ENCODE measurements at regions of chr20 and their contacts with region 1.

Region 1: DNA sequence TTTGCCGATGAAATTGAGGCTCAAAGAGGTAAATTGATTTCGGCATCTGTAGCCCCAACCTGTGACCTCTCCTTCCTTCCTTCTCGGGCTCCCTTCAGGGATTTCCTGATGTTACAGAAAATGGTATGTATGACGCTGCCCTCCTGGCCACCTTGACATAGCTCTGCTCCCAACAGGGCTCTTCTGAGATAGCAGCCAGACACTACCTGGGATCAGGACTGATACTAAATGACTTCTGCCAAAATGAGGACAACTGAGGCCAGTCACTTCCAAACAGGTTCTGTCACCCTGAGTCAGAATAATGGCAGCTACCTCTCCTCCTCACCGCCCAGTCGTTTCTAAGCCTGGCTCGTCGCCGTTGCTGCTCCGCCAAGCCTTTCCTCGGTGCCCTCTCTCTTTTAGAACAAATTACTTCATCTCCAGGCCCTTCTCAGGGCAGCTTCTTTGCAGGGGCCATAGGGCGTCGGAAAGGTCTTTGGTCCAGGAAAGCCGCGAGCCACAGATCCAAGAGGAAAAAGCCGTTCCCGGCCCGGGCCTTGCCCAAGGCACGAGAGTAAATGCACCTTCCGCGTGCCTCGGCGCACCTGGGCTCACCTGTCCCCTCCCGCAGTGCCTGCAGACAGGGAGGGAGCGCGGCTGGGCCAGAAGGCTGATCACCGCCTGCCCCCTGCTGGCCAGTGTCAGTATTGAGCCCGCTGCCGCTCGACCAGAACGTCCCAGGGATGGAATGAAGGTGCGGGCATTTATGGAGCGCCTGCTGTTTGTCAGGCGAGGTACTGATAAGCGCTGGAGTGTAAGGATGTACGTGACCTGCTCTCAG is 904 bp upstream of the LPIN3 start:
- DNase-seq: peak; percentile 85 to 86
- ATAC-seq: peak; percentile 69 to 89 (median 84)
- H3K4me3 ChIP-seq: peak overlapping the region in 9 of 10 donors; percentile 36 to 67 (median 59)
- H3K27ac ChIP-seq: peak overlapping the region; percentile 40 to 86 (median 80)
- H3K4me1 ChIP-seq: peaks cover 3 to 48% (median 25%) of the 10 kb centered on the region in 9 donors
- H3K27me3 ChIP-seq: peaks cover 0 to 11% (median 0%) of the 10 kb centered on the region in 7 donors
- CTCF ChIP-seq: peak; percentile 98 to 100 (median 99)

Region 2: DNA sequence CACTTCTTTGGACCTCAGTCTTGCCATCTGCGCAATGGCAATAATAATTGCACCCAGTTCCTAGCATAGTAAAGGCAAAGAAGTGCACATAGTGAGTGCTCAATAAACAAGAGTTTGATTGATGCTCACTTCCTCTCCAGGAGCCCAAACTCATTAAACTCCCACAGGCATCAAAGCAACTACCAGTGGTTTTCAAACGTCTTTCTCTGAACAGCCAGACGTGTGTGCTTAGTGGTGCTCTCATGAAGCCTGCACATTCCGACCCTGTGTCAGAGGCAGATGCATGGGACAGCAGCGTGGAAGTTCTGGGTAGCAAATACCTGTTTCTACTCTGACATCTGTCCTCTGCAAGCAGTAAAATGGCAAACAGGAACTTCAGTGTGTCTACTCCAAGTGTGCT is 504.4 kb before region 1 on chr20:
- intact Hi-C with region 1: no loop called
- DNase-seq: no peak
- ATAC-seq: no peak
- H3K4me3 ChIP-seq: no peak overlapping the region
- H3K27ac ChIP-seq: no peak overlapping the region
- H3K4me1 ChIP-seq: no peaks in the 10 kb centered on the region
- H3K27me3 ChIP-seq: peaks cover 0 to 5% (median 0%) of the 10 kb centered on the region in 7 donors
- CTCF ChIP-seq: no peak

Region 3: GRCh38 chr20:40962730-40963504 is 376.8 kb before region 1 on chr20:
- intact Hi-C with region 1: loop called in 3 of 10 experiments (anchors 5 to 10 kb)
- DNase-seq: peak; percentile 62 to 65
- ATAC-seq: peak; percentile 77 to 89 (median 84)
- H3K4me3 ChIP-seq: no peak overlapping the region
- H3K27ac ChIP-seq: no peak overlapping the region
- H3K4me1 ChIP-seq: peaks cover 0 to 15% (median 0%) of the 10 kb centered on the region in 9 donors
- H3K27me3 ChIP-seq: peaks cover 0 to 4% (median 0%) of the 10 kb centered on the region in 7 donors
- CTCF ChIP-seq: peak; percentile 82 to 96 (median 92)

Region 4: DNA sequence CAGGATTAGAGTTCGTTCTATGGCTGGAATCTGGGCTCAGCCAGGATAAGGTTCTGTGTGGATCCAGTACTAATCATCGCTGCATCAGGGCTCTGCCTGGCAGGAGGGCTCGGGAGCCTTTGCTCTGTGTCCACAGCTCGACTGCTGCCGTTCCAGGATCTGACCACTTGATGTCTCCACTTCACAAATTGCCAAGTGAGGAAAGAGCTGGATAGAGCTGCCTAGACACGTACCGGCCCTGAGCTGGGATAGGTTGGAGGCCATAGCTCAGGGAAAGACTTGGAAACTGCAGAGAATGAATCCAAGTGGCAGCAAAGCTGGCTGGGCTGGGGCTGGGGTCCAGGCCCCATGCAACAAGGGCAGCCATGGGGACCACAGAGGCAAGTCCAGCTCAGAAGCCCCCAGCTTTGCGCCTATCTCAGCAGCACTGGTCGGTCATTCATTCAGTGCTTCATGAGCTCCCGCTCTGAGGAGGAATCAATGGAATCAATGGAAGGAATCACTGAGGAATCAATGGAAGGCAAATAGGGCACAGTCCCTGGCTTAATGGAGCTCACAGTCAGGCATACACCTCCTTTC is 349.1 kb before region 1 on chr20:
- intact Hi-C with region 1: loop called in 1 of 10 experiments (anchors 10 kb)
- DNase-seq: peak; percentile 68 to 83
- ATAC-seq: peak; percentile 96 to 99 (median 97)
- H3K4me3 ChIP-seq: no peak overlapping the region
- H3K27ac ChIP-seq: peak overlapping the region in 1 of 10 donors; percentile 79
- H3K4me1 ChIP-seq: peaks cover 0 to 24% (median 6%) of the 10 kb centered on the region in 9 donors
- H3K27me3 ChIP-seq: no peaks in the 10 kb centered on the region
- CTCF ChIP-seq: peak; percentile 66 to 91 (median 83)

Region 5: GRCh38 chr20:41173161-41173721 is 166.5 kb before region 1 on chr20:
- intact Hi-C with region 1: loop called (anchors 1 to 5 kb)
- DNase-seq: peak; percentile 89 to 90
- ATAC-seq: peak; percentile 79 to 89 (median 85)
- H3K4me3 ChIP-seq: peak overlapping the region in 1 of 10 donors; percentile 0
- H3K27ac ChIP-seq: peak overlapping the region; percentile 66 to 93 (median 85)
- H3K4me1 ChIP-seq: peaks cover 30 to 72% (median 62%) of the 10 kb centered on the region in 9 donors
- H3K27me3 ChIP-seq: no peaks in the 10 kb centered on the region
- CTCF ChIP-seq: peak; percentile 94 to 99 (median 98)

Region 6: DNA sequence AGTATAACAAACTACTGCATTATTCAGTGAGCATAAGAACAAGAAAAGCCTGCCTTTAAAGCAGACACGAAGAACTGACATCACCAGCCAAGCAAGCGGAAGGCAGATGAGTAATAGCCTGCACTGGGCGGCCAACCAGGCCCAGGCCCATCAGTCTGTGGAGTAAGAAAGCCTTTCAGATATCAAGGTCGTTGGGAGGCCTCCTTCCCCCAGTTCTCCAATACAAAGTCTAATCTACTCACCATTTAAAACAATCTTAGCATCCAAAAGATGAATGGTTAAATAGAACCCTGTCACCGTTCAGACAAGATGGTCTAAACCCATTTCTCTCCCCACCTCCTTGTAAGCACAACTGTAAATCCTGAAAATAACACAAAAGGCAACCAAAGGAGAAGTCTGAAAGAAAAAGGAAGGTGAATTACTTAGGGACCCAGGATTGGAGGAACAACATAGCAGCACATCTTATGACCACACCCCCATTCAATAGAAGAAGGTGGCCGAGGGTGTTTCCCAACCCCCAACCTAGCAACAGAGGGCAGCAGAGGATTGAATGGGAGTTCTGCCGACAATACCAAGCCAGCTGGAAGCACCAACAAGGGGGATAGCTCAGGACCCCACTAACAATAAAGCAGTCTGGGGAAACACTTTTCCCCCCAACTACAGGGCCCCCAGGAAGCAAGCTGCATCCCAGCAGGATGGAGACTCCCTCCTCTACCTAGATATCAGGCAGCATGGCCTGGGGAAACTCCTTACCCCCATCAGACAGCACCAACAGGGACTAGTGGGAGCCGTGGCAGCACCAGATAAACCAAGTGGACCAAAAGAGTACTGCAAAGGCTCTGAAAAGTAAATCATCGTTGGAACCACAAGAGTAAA is 90.1 kb before region 1 on chr20:
- intact Hi-C with region 1: loop called in 5 of 10 experiments (anchors 1 to 5 kb)
- DNase-seq: peak; percentile 57 to 65
- ATAC-seq: peak; percentile 62 to 89 (median 81)
- H3K4me3 ChIP-seq: peak overlapping the region in 1 of 10 donors; percentile 3
- H3K27ac ChIP-seq: peak overlapping the region; percentile 83 to 94 (median 88)
- H3K4me1 ChIP-seq: peaks cover 26 to 74% (median 62%) of the 10 kb centered on the region in 9 donors
- H3K27me3 ChIP-seq: no peaks in the 10 kb centered on the region
- CTCF ChIP-seq: peak in 7 of 9 donors; percentile 17 to 58 (median 37)

Region 7: DNA sequence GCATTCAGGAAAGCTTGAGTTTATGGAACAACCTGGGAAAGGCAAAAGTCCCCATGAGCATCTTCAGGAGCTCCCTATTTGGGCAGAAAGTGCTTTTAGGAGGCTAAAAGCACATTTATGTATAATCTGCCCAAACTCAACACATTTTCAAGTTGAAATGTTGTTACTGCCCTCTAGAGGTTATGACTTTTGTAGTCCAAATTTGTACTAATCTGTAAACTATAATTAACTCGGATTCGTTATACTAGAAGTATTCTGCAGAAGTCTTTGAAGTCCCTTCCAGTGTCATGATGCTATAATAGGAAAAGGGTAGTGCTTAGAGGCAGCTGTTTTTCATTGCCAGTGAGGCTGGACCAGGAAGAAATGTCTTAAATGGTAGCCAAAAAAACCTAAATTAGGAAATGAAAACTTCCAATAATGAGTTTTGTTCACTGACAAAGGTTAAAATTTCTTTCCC is 71.7 kb after region 1 on chr20:
- intact Hi-C with region 1: loop called in 8 of 10 experiments (anchors 1 to 5 kb)
- DNase-seq: no peak
- ATAC-seq: peak; percentile 54 to 89 (median 79)
- H3K4me3 ChIP-seq: no peak overlapping the region
- H3K27ac ChIP-seq: peak overlapping the region; percentile 11 to 92 (median 78)
- H3K4me1 ChIP-seq: peaks cover 0 to 66% (median 39%) of the 10 kb centered on the region in 9 donors
- H3K27me3 ChIP-seq: no peaks in the 10 kb centered on the region
- CTCF ChIP-seq: peak; percentile 25 to 73 (median 56)

Region 8: GRCh38 chr20:41693136-41693979 is 353.6 kb after region 1 on chr20:
- intact Hi-C with region 1: loop called in 2 of 10 experiments (anchors 2 to 5 kb)
- DNase-seq: peak; percentile 74 to 82
- ATAC-seq: peak; percentile 94 to 98 (median 96)
- H3K4me3 ChIP-seq: peak overlapping the region; percentile 62 to 95 (median 82)
- H3K27ac ChIP-seq: peak overlapping the region; percentile 81 to 99 (median 93)
- H3K4me1 ChIP-seq: peaks cover 0 to 16% (median 6%) of the 10 kb centered on the region in 9 donors
- H3K27me3 ChIP-seq: peaks cover 0 to 5% (median 0%) of the 10 kb centered on the region in 7 donors
- CTCF ChIP-seq: peak in 8 of 9 donors; percentile 34 to 79 (median 60)